ENCODE measurements at regions of chr19 and their contacts with region 1.

Region 1: DNA sequence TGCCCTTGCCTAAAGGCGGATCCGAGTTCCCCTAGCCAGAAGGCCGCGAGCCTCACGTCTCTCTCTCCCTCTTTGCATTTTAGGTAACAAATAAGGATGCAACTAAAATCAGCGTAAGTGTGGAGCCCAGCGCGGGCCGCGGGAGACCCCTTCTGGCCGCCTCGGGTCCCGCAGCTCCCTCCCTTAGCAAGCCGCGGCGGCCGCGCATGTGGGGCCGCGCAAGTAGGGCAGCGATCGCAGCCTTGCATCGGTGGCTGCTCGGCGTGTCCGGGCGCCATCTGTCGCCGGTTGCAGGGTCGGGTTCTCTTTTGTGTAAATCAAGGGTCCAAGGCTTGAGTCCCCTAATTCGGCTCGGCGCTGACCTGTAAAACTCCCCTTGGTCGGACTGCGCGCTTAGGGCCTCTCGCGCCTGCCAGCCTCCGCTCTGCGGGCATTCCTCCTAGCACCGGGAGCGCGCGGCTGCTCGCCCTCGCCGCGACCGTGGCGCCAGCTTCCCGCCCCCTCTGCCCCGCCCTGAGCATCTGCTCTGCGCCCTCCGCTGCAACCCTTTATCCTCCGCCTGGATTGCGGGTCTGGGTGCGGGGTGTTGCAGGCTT is 2.7 kb downstream of the VSTM2B start:
- DNase-seq: peak; percentile 89

Region 2: GRCh38 chr19:29285878-29286277 is 242.6 kb before region 1 on chr19:
- intact Hi-C with region 1: loop called in 1 of 2 experiments (anchors 10 kb)
- DNase-seq: no peak

Region 3: DNA sequence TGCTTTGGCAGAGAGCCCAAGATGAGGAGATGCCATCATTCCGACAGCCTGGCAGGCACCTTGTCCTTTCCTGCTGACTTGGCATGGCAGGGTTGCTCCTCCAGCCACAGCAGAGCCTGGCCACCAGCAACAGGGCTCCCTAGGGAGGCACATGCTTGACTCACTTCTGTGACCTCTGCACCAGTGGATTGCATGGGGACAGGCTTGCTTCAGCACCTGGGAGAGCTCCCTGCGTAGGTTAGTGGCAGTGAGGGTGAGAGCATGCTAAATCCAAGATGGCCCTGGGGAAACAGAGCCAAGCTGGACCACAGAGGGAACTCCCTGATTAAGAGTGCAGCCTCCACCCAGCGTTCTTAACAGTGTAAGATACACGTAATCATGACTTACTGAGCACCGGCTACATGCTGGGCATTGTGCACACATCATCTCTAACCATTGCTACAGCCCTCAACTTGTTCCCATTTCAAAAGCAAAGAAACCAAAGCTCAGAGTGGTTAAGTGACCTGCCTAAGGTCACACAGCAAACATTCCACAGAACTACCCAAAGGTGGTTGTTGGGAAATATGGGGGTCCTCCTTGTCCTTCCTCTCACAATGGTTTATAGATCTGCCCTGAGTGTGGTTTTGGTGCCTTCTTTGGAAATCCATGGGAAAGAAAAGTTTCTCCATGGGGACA is 198.9 kb before region 1 on chr19:
- intact Hi-C with region 1: no loop called
- DNase-seq: peak; percentile 35

Region 4: DNA sequence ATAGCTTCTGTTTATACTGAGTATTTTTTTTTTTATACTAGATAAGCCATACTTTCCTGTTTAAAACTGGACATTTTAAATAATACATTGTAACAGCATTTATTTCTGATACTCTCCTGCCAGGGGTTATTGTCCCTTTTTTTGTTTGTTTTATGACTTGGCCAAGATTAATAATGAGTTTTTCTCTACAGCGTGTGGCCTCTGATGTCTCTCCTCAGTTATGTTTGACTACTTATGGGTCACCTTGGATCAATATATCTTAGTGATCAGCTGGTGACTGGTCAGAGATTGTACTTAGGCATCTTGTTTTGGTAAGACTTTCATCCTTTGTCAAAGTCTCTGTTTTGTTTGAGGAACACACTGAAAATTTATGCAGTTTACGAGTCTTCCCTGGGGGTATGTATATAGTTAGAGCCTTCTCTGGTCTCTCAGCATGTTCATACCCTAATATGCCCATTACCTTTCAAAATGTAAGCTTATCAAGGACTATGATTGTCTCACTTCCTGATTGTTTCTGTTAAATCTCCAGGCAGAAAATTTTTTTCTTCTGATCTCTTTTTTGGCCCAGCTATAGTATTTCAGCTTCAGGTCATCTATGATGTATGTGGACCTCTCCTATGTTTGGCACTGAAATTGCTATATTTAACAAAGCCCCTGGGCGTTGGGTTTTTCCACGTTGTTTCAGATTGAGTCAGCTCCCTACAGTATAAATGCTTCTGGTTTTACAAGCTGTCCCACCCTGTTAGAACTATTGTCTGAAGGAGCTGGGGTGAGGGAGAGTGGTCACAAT is 501.5 kb after region 1 on chr19:
- intact Hi-C with region 1: no loop called
- DNase-seq: no peak